HepG2 (cell line): ENCODE measurements at regions of chr16 and their contacts with region 1.

Region 1: DNA sequence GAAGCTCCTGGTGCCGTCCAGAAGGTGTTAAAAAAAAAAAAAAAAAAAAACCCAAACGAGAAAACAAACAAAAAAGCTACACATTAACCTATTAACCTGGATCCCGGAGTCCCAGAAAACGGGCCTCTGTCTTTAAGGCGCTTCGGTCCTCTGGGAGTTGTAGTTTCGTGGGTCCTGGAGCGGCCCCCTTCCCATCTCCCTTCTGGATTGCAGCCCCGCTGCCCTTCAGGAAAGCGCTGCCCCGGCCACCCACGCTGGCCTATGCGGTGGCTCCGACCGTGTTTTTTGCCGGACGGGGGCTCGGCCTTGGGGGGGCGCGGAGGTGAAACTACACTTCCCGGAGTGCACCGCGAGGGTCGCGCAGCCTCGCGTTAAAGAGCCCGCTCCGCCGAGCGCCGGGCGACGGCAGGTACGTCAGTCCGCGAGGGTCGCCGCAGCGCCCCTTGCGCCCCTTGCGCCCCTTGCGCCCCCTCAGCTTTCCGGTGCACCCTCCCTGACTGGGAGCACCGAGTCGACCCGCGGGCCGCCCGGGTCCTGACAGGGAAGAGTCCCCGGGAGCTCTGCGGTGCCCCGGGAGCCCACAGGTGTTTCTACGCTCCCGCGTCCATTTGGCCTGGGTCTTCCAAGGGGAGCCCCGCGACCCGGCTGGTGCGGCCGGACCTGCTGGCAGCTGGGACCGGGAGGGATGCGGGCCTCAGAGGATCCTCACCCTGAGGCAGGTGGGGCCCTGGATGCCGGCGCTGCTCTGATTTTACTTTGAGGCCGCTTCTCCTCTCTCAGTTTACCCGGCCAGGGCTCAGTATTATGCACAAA is at the start of gene FCSK:
- DNase-seq: peak; percentile 88
- ATAC-seq: peak; percentile 93
- H3K4me3 ChIP-seq: peak within 1 kb of the TSS; percentile 88 to 90 (median 89)
- H3K27ac ChIP-seq: peak within 1 kb of the TSS; percentile 97
- H3K4me1 ChIP-seq: peaks cover 45% of the 10 kb centered on the region
- H3K27me3 ChIP-seq: no peaks in the 10 kb centered on the region; a peak in 1 of 5 replicates
- CTCF ChIP-seq: peak; percentile 73
- EP300 ChIP-seq: peak in 1 of 2 experiments; percentile 70; a peak in 1 of 4 replicates
- POLR2A ChIP-seq: peak in 1 of 2 experiments; percentile 82; a peak in 3 of 4 replicates
- RAD21 ChIP-seq: peak; percentile 81
- total RNA-seq, gene FCSK: 4.9 and 9.1 TPM in 2 replicates

Region 2: DNA sequence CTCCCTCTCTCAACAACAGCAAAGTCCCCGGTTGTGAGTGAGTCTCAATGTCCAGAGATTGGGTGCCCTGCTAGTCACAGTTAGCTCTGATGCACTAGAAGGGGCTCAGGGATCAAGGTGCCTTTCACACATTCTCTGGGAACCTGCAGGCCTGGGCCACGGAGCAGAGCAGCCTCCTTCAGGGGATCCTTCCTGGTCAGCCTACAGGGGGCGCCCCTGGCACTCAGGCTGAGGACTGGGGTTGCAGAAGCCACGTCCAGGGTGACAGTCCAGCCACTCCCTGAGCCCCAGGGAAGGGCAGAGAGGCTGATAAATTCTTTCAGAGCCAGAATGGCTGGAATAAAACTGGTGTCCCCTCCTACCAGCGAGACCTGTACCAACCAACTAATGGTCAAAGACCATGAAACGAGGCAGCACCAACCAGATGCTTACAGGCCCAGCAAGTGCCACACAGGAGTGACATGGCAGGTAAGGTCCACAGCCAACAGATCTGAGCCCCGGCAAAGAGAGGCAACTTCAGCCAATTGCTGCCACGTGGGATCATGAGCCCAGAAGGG is 59.0 kb before region 1 on chr16:
- CTCF ChIA-PET with region 1: interaction called, 5 read pairs
- POLR2A ChIA-PET with region 1: interaction called, 4 read pairs
- in situ Hi-C with region 1: no loop called
- intact Hi-C with region 1: loop called (anchors 5 kb)
- DNase-seq: peak; percentile 72
- ATAC-seq: peak; percentile 95
- H3K4me3 ChIP-seq: no peak overlapping the region
- H3K27ac ChIP-seq: no peak overlapping the region
- H3K4me1 ChIP-seq: peaks cover 4% of the 10 kb centered on the region; the same call in 1 of the 2 replicates
- H3K27me3 ChIP-seq: no peaks in the 10 kb centered on the region
- CTCF ChIP-seq: peak; percentile 99
- EP300 ChIP-seq: no peak
- POLR2A ChIP-seq: no peak
- RAD21 ChIP-seq: peak; percentile 99

Region 3: GRCh38 chr16:70416748-70417616 is 37.4 kb before region 1 on chr16:
- CTCF ChIA-PET with region 1: no interaction called
- POLR2A ChIA-PET with region 1: interaction called, 7 read pairs
- in situ Hi-C with region 1: no loop called
- intact Hi-C with region 1: loop called (anchors 5 kb)
- DNase-seq: peak; percentile 58
- ATAC-seq: peak; percentile 81
- H3K4me3 ChIP-seq: no peak overlapping the region
- H3K27ac ChIP-seq: peak overlapping the region; percentile 50
- H3K4me1 ChIP-seq: peaks cover 67% of the 10 kb centered on the region
- H3K27me3 ChIP-seq: no peaks in the 10 kb centered on the region
- CTCF ChIP-seq: peak; percentile 80
- EP300 ChIP-seq: peak in 1 of 2 experiments; percentile 43; a peak in 1 of 4 replicates
- POLR2A ChIP-seq: no peak
- RAD21 ChIP-seq: peak; percentile 77

Region 4: GRCh38 chr16:70428178-70428998 is 26.0 kb before region 1 on chr16:
- CTCF ChIA-PET with region 1: no interaction called
- POLR2A ChIA-PET with region 1: interaction called, 43 read pairs
- in situ Hi-C with region 1: no loop called
- intact Hi-C with region 1: loop called (anchors 1 kb)
- DNase-seq: peak; percentile 100
- ATAC-seq: peak; percentile 90
- H3K4me3 ChIP-seq: peak overlapping the region; percentile 15 to 64 (median 47)
- H3K27ac ChIP-seq: peak overlapping the region; percentile 96
- H3K4me1 ChIP-seq: peaks cover 90% of the 10 kb centered on the region
- H3K27me3 ChIP-seq: no peaks in the 10 kb centered on the region
- CTCF ChIP-seq: no peak
- EP300 ChIP-seq: peak; percentile 88 to 97
- POLR2A ChIP-seq: peak; percentile 74 to 75
- RAD21 ChIP-seq: peak; percentile 68

Region 5: DNA sequence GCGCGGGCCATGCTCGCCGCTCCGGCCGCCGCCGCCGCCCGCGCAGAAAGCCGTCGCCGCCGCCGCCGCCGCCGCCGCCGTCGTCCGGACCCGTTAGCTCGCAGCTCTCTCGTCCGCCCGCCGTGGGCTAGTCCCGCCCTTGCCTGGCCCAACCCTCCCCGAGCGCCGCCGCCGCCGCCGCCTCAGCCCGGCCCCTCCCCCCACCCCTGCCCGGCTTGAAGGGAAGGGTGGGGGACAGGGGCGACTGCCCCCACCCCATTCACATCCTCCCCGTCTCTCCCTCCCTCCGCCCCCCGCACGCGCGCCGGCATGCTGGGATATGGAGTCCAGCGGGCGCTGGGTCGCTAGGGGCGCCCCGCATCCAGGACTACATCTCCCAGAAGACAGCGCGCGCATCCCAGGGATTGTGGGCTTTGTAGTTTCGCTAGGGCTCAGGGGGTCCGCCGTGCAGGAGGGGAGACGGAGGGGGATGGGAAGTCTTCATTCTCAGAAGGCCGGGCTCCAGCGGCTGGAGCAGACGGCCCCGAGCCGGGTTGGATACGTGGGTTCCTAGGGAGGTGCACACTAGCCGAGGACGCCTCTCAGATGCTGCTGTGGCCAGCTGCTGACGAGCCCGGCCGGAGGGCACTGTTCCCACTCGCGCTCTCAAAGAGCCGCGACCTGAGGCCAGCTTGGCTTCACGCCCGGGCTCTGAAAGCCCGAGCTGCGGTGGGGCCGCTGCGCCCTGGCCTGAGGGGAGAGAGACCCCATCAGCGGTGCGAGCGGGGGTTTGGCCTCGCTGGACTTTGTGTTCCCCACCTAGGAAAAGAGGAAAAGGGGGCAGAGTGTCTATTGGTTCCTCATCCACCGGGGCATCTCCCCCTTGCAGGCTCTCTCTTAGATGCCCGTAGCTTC is 15.2 kb before region 1 on chr16 and contains the start of gene ST3GAL2:
- CTCF ChIA-PET with region 1: no interaction called
- POLR2A ChIA-PET with region 1: interaction called, 78 read pairs
- in situ Hi-C with region 1: no loop called
- intact Hi-C with region 1: no loop called
- DNase-seq: peak; percentile 93
- ATAC-seq: peak; percentile 88
- H3K4me3 ChIP-seq: peak within 1 kb of the TSS; percentile 82 to 92 (median 89)
- H3K27ac ChIP-seq: peak within 1 kb of the TSS; percentile 69
- H3K4me1 ChIP-seq: peaks cover 66% of the 10 kb centered on the region
- H3K27me3 ChIP-seq: no peaks in the 10 kb centered on the region; a peak in 1 of 5 replicates
- CTCF ChIP-seq: peak; percentile 27
- EP300 ChIP-seq: peak in 1 of 2 experiments; percentile 54; a peak in 2 of 4 replicates
- POLR2A ChIP-seq: peak; percentile 56 to 72; a peak in 3 of 4 replicates
- RAD21 ChIP-seq: peak; percentile 51
- total RNA-seq, gene ST3GAL2: 17.8 and 24.9 TPM in 2 replicates

Region 6: DNA sequence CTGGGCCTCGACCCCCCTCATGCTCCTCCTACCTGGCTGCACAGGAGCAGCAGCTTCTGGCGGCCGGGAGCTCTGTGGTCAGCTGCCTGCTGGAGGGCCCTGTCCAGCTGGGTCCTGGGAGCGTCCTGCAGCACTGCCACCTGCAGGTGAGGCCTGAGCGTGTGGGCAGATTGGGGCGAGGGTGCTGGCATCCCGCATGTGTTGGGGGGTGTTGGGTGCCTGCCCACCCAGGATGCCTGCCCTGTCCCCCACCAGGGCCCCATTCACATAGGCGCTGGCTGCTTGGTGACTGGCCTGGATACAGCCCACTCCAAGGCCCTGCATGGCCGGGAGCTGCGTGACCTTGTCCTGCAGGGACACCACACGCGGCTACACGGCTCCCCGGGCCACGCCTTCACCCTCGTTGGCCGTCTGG is 16.5 kb after region 1 on chr16:
- CTCF ChIA-PET with region 1: no interaction called
- POLR2A ChIA-PET with region 1: interaction called, 14 read pairs
- in situ Hi-C with region 1: no loop called
- intact Hi-C with region 1: no loop called
- DNase-seq: peak; percentile 61
- ATAC-seq: peak; percentile 87
- H3K4me3 ChIP-seq: no peak overlapping the region
- H3K27ac ChIP-seq: no peak overlapping the region
- H3K4me1 ChIP-seq: peaks cover 5% of the 10 kb centered on the region; the same call in 1 of the 2 replicates
- H3K27me3 ChIP-seq: no peaks in the 10 kb centered on the region
- CTCF ChIP-seq: peak; percentile 96
- EP300 ChIP-seq: no peak
- POLR2A ChIP-seq: no peak
- RAD21 ChIP-seq: peak; percentile 99

Region 7: GRCh38 chr16:70508752-70509151 is 54.3 kb after region 1 on chr16:
- CTCF ChIA-PET with region 1: no interaction called
- POLR2A ChIA-PET with region 1: no interaction called
- in situ Hi-C with region 1: no loop called
- intact Hi-C with region 1: no loop called
- DNase-seq: no peak
- ATAC-seq: no peak
- H3K4me3 ChIP-seq: no peak overlapping the region
- H3K27ac ChIP-seq: no peak overlapping the region
- H3K4me1 ChIP-seq: peaks cover 9% of the 10 kb centered on the region
- H3K27me3 ChIP-seq: no peaks in the 10 kb centered on the region
- CTCF ChIP-seq: 0 out of 2 replicates have a peak, but pooled peaks have one; percentile 7
- EP300 ChIP-seq: no peak
- POLR2A ChIP-seq: no peak
- RAD21 ChIP-seq: no peak